ENCODE measurements at regions of chr1 and their contacts with region 1.

Region 1: DNA sequence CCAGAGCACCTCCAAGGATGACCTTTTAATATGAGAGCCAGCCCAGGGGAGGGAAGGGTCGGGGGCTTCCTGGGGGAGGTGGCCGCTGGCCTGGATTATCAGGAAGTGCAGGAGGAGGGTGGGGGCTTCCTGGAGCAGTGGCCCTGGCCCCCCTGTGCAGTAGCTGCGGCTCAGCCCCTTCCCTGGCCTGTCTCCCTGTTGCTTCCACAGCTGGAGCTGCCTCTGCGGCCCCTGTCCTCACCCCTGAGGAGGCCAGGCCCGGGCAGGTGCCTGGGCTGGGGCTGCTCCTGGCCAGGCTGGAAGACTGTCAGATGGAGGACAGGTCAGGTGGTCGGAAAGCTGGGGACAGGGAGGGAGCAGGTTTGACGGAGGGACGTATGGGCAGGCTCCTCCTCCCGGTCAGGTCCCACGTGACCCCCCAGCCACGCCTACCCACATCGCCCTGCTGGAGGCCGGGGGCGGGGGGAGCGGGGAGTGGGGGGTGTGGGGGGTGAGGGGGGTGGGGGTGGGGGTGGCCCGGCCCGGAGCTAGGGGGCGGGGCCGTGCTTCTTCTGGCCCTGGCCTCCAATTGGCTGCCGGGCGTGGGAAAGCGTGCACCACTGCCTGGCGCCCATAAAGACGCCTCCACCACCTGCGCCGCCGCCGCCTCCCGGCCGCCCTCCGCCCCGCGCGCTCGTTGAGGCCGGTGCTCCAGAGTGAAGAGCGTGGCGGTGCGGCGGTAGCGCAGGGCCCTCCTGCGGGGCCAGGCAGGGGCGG is 10.2 kb upstream of the TNFRSF14 start:
- DNase-seq: peak in 3 of 5 donors; percentile 58 to 76 (median 76)
- H3K4me3 ChIP-seq: peak overlapping the region; percentile 37
- H3K27ac ChIP-seq: peak overlapping the region in 1 of 2 donors; percentile 29
- H3K4me1 ChIP-seq: peaks cover 21% of the 10 kb centered on the region
- H3K27me3 ChIP-seq: no peaks in the 10 kb centered on the region
- CTCF ChIP-seq: no peak
- EP300 ChIP-seq: no peak
- POLR2A ChIP-seq: no peak

Region 2: DNA sequence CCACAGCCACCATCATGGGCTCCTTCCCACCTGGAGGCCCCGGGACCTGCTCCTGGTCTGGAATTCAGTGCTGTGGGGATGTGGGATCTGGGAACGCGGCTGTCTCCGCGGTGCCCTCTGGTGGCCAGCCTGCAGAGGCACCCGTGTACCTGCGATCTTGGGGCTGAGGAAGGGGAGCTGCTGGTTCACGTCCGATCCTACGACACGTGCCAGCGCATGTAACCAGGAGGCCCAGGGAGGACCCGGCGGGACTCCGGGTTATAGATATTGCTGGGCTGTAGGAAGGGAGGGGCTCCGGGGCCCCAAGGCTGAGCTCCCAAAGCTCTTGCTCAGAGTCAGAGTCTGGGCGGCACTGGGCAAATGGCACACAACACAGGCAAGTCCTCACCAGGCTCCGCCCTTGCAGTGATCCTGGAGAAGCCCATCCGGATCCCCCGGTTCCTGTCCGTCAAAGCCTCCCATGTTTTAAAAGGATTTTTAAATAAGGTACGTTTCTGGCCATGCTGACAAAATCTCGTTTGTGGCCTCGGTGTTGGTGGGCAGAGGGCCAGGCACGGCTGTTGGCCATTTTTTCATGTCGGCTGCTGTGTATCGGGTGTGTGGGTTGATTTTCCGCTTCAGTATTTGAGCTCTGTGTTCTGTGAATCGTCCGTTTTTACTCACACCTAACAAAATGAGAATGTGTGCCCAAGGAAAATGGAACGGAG is 371.4 kb before region 1 on chr1:
- intact Hi-C with region 1: loop called in 1 of 4 experiments (anchors 10 kb)
- DNase-seq: peak; percentile 66 to 80 (median 76)
- H3K4me3 ChIP-seq: peak overlapping the region; percentile 20
- H3K27ac ChIP-seq: peak overlapping the region in 1 of 2 donors; percentile 6
- H3K4me1 ChIP-seq: peaks cover 9% of the 10 kb centered on the region
- H3K27me3 ChIP-seq: no peaks in the 10 kb centered on the region
- CTCF ChIP-seq: peak; percentile 74 to 94 (median 86)
- EP300 ChIP-seq: no peak
- POLR2A ChIP-seq: no peak

Region 3: GRCh38 chr1:2189459-2190425 is 356.2 kb before region 1 on chr1:
- intact Hi-C with region 1: loop called in 1 of 4 experiments (anchors 1 kb)
- DNase-seq: peak; percentile 89 to 96 (median 96)
- H3K4me3 ChIP-seq: peak overlapping the region; percentile 58
- H3K27ac ChIP-seq: peak overlapping the region; percentile 79 to 93
- H3K4me1 ChIP-seq: peaks cover 25% of the 10 kb centered on the region
- H3K27me3 ChIP-seq: no peaks in the 10 kb centered on the region
- CTCF ChIP-seq: peak in 1 of 3 donors; percentile 16
- EP300 ChIP-seq: peak; percentile 33
- POLR2A ChIP-seq: peak; percentile 83

Measured in ovary (tissue), 10 donors.